Dendritic cell treated with granulocyte-macrophage colony-stimulating factor and Interleukin-4, amounts not matched to agents 40 ng/mL and 50 ng/mL, for 4 days (primary cell): ENCODE measurements at regions of chr3 and their contacts with region 1.

Region 1: GRCh38 chr3:182925330-182925943 is 54.9 kb downstream of the DCUN1D1 start:
- H3K4me3 Mint-ChIP-seq: no peak overlapping the region
- H3K27ac Mint-ChIP-seq: peak overlapping the region; percentile 45
- H3K4me1 Mint-ChIP-seq: peaks cover 17% of the 10 kb centered on the region
- H3K27me3 Mint-ChIP-seq: no peaks in the 10 kb centered on the region

Region 2: DNA sequence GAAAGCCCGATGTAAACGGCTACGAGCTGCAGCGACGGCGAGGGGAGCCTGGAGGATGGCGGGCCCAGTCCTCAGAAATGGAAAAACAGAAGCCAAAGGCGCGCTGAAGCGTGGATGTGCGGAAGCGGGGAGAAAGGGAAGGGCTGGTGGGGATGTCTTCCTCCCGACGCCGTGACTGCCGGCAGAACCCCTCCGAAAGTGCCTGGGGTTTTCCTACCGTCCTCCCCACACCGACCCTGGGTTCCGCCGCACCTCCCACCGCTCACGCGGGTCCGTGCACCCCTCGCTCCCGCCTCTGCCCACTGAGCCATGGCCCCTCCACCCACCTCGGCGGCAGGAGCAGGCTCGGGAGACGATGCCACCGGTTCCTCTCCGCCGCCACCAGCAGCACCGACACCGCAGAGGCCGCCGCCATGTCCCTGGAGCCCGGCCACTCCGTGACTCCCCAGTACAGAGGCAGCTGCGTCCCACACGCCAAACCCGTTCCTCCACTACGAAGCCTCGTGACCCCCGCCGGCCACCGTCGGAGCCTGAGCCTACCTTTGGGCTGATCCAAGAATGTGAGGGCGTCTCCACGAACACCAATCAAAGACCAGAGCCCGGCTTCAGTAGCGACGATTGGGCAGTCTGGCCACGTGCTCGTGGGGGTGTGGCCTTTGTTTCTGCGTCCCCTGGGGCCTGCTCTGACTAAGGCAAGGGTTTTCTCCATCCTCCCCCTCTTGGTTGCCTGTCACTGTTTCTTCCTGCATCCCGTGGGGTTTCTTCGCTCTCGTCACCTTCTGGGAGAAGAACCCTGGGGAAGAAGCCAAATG is 173.8 kb after region 1 on chr3 and contains the start of gene MCCC1:
- intact Hi-C with region 1: loop called (anchors 10 kb)
- H3K4me3 Mint-ChIP-seq: peak within 1 kb of the TSS; percentile 93
- H3K27ac Mint-ChIP-seq: peak within 1 kb of the TSS; percentile 98
- H3K4me1 Mint-ChIP-seq: peaks cover 33% of the 10 kb centered on the region
- H3K27me3 Mint-ChIP-seq: no peaks in the 10 kb centered on the region